Naive thymus-derived CD4-positive, alpha-beta T cell (primary cell): ENCODE measurements at regions of chr2 and their contacts with region 1.

Region 1: GRCh38 chr2:172172513-172173173 is 69.9 kb upstream of the DLX2 start:
- DNase-seq: peak; percentile 18 to 74 (median 61)
- ATAC-seq: peak; percentile 97
- H3K4me3 ChIP-seq: peak overlapping the region; percentile 55
- H3K4me3 Mint-ChIP-seq: peak overlapping the region; percentile 69 to 86 (median 79)
- H3K27ac ChIP-seq: peak overlapping the region; percentile 49
- H3K27ac Mint-ChIP-seq: peak overlapping the region in 4 of 9 donors; percentile 12 to 68 (median 47)
- H3K4me1 ChIP-seq: peaks cover 0 to 3% of the 10 kb centered on the region in 2 donors
- H3K4me1 Mint-ChIP-seq: peaks cover 6 to 10% (median 6%) of the 10 kb centered on the region in 7 donors
- H3K27me3 ChIP-seq: no peaks in the 10 kb centered on the region
- H3K27me3 Mint-ChIP-seq: peaks cover 0 to 53% (median 0%) of the 10 kb centered on the region in 5 donors

Region 2: DNA sequence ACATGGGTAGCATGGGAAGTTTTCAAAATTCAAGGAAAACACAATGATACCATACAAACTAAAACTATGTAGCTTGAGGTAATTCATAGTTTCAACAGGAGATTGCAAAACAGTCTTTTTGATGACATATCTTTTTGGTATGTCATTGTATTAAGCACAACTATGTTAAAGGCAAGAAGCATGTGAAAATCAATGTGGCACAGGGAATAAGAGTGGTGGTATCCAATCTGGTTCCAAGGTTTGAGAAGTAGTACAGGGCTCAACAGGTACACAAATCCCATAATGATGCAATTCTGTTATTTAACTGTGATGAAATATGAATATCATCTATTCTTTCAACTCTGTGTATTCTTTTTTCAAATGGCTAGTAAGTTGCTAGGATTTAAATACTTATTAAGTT is 53.6 kb before region 1 on chr2:
- CTCF ChIA-PET with region 1: no interaction called
- POLR2A ChIA-PET with region 1: no interaction called
- intact Hi-C with region 1: no loop called
- DNase-seq: no peak
- ATAC-seq: no peak
- H3K4me3 ChIP-seq: no peak overlapping the region
- H3K4me3 Mint-ChIP-seq: no peak overlapping the region
- H3K27ac ChIP-seq: no peak overlapping the region
- H3K27ac Mint-ChIP-seq: no peak overlapping the region
- H3K4me1 ChIP-seq: no peaks in the 10 kb centered on the region
- H3K4me1 Mint-ChIP-seq: no peaks in the 10 kb centered on the region
- H3K27me3 ChIP-seq: no peaks in the 10 kb centered on the region
- H3K27me3 Mint-ChIP-seq: peaks cover 15 to 30% (median 26%) of the 10 kb centered on the region in 5 donors

Region 3: DNA sequence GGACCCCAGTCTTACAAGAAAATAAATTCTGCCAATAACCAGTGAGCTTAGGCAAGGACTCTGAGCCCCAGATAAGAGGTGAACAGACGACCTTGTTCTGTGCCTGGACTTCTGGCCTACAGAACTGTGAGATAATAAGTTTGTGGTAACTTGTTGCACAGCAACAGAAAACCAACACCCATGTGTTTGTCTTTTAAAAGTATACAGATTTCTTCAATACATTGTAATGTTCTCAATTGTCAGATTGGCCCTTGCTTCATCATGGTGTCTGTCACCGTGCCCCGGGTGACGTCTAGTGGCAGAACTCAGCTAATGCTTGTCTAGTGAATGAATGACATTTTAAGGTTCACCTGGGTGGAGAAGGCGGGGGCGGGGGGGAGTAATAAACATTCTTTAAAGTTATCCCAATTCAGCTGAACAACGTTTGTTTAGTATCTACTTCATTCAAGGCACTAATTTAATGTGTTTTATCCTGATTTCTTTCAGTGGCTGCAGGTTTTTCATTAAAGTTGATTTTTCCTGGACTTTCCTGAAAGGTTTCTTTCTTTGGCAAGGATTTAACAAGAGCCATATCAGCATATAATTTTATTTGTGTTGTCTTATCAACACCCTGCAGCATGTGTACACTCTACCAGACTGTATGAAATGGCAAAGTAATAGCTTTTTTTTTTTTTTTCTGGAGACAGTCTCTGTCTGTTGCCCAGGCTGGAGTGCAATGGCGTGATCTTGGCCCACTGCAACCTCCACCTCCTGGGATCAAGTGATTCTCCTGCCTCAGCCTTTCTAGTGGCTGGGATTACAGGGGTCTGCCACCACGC is 53.8 kb after region 1 on chr2:
- CTCF ChIA-PET with region 1: interaction called, 6 read pairs
- POLR2A ChIA-PET with region 1: interaction called, 3 read pairs
- intact Hi-C with region 1: loop called (anchors 1 to 5 kb)
- DNase-seq: peak in 7 of 9 donors; percentile 32 to 51 (median 37)
- ATAC-seq: peak; percentile 78
- H3K4me3 ChIP-seq: no peak overlapping the region
- H3K4me3 Mint-ChIP-seq: no peak overlapping the region
- H3K27ac ChIP-seq: no peak overlapping the region
- H3K27ac Mint-ChIP-seq: peak overlapping the region in 4 of 9 donors; percentile 2 to 44 (median 36)
- H3K4me1 ChIP-seq: peaks cover 0 to 45% of the 10 kb centered on the region in 2 donors
- H3K4me1 Mint-ChIP-seq: peaks cover 42 to 71% (median 64%) of the 10 kb centered on the region in 7 donors
- H3K27me3 ChIP-seq: no peaks in the 10 kb centered on the region
- H3K27me3 Mint-ChIP-seq: peaks cover 0 to 6% (median 0%) of the 10 kb centered on the region in 5 donors

Region 4: GRCh38 chr2:172427256-172427989 is 254.8 kb after region 1 on chr2 and contains the start of gene ITGA6:
- CTCF ChIA-PET with region 1: interaction called, 4 read pairs
- POLR2A ChIA-PET with region 1: no interaction called
- intact Hi-C with region 1: loop called in 1 of 2 experiments (anchors 1 kb)
- DNase-seq: peak; percentile 55 to 84 (median 80)
- ATAC-seq: peak; percentile 81
- H3K4me3 ChIP-seq: peak within 1 kb of the TSS; percentile 76
- H3K4me3 Mint-ChIP-seq: peak within 1 kb of the TSS in 7 of 10 donors; percentile 92 to 100 (median 98)
- H3K27ac ChIP-seq: peak within 1 kb of the TSS; percentile 76
- H3K27ac Mint-ChIP-seq: peak within 1 kb of the TSS in 8 of 9 donors; percentile 90 to 96 (median 95)
- H3K4me1 ChIP-seq: peaks cover 17 to 44% of the 10 kb centered on the region in 2 donors
- H3K4me1 Mint-ChIP-seq: peaks cover 21 to 65% (median 46%) of the 10 kb centered on the region in 7 donors
- H3K27me3 ChIP-seq: no peaks in the 10 kb centered on the region
- H3K27me3 Mint-ChIP-seq: peaks cover 0 to 82% (median 0%) of the 10 kb centered on the region in 5 donors
- total RNA-seq, gene ITGA6: 13.1 to 179 (median 135) TPM

Region 5: GRCh38 chr2:172596776-172597175 is 424.1 kb after region 1 on chr2:
- CTCF ChIA-PET with region 1: interaction called, 3 read pairs
- POLR2A ChIA-PET with region 1: no interaction called
- intact Hi-C with region 1: loop called in 1 of 2 experiments (anchors 10 kb)
- DNase-seq: no peak
- ATAC-seq: no peak
- H3K4me3 ChIP-seq: no peak overlapping the region
- H3K4me3 Mint-ChIP-seq: no peak overlapping the region
- H3K27ac ChIP-seq: no peak overlapping the region
- H3K27ac Mint-ChIP-seq: no peak overlapping the region
- H3K4me1 ChIP-seq: no peaks in the 10 kb centered on the region
- H3K4me1 Mint-ChIP-seq: peaks cover 2 to 56% (median 35%) of the 10 kb centered on the region in 7 donors
- H3K27me3 ChIP-seq: no peaks in the 10 kb centered on the region
- H3K27me3 Mint-ChIP-seq: no peaks in the 10 kb centered on the region

Region 6: GRCh38 chr2:172674034-172674967 is 501.7 kb after region 1 on chr2:
- CTCF ChIA-PET with region 1: no interaction called
- POLR2A ChIA-PET with region 1: no interaction called
- intact Hi-C with region 1: loop called in 1 of 2 experiments (anchors 2 kb)
- DNase-seq: peak in 7 of 9 donors; percentile 7 to 38 (median 28)
- ATAC-seq: peak; percentile 68
- H3K4me3 ChIP-seq: peak overlapping the region; percentile 40
- H3K4me3 Mint-ChIP-seq: peak overlapping the region in 9 of 10 donors; percentile 25 to 68 (median 47)
- H3K27ac ChIP-seq: no peak overlapping the region
- H3K27ac Mint-ChIP-seq: no peak overlapping the region
- H3K4me1 ChIP-seq: no peaks in the 10 kb centered on the region
- H3K4me1 Mint-ChIP-seq: peaks cover 0 to 5% (median 0%) of the 10 kb centered on the region in 7 donors
- H3K27me3 ChIP-seq: no peaks in the 10 kb centered on the region
- H3K27me3 Mint-ChIP-seq: peaks cover 0 to 4% (median 0%) of the 10 kb centered on the region in 5 donors